IMR-90 (cell line): ENCODE measurements at regions of chr3 and their contacts with region 1.

Region 1: DNA sequence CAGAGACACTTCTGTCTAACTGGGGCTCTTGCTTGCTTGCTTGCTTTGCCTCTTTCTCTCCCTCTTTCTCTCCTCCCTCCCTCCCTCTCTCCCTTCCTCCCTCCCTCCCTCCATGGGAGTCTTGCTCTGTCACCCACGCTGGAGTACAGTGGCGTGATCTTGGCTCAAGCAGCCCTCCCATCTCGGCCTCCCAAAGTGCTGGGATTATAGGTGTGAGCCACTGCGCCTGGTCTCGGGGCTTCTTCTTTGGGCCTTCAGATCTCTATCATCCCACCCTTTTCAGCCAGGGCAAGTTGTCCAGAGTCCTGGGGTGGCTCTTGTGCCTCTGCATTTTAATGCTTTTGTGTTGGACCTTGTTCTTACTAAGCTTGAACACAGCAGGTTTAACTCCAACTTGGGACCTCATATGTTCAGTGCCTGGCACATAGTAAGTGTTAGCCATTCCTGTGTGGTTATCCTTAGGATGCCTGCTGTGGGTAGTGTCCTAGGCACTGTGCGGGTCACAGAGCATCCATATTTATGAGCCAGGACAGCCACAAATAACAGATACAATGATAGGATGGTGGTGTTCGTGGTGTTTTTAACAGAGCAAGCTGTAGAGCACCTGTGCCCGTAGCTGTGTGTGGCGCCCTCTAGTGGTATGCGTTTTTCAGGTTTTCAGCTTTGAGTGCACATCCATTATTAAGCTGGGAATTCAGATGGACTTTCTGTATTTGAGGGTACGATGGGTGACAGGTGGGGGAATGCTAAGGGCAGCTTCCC is 75.1 kb downstream of the CCK start:
- DNase-seq: peak; percentile 52
- ATAC-seq: peak; percentile 75
- H3K4me3 ChIP-seq: no peak overlapping the region
- H3K27ac ChIP-seq: no peak overlapping the region
- H3K4me1 ChIP-seq: peaks cover 4% of the 10 kb centered on the region
- H3K27me3 ChIP-seq: no peaks in the 10 kb centered on the region
- CTCF ChIP-seq: peak; percentile 74
- POLR2A ChIP-seq: no peak
- RAD21 ChIP-seq: peak; percentile 77

Region 2: GRCh38 chr3:41893977-41894376 is 296.9 kb before region 1 on chr3:
- CTCF ChIA-PET with region 1: interaction called, 4 read pairs
- POLR2A ChIA-PET with region 1: no interaction called
- dilution Hi-C with region 1: no loop called
- in situ Hi-C with region 1: loop called (anchors 5 kb)
- intact Hi-C with region 1: loop called (anchors 1 kb)
- DNase-seq: peak; percentile 62
- ATAC-seq: peak; percentile 68
- H3K4me3 ChIP-seq: no peak overlapping the region
- H3K27ac ChIP-seq: no peak overlapping the region
- H3K4me1 ChIP-seq: no peaks in the 10 kb centered on the region
- H3K27me3 ChIP-seq: no peaks in the 10 kb centered on the region
- CTCF ChIP-seq: peak; percentile 65
- POLR2A ChIP-seq: no peak
- RAD21 ChIP-seq: peak; percentile 77

Region 3: DNA sequence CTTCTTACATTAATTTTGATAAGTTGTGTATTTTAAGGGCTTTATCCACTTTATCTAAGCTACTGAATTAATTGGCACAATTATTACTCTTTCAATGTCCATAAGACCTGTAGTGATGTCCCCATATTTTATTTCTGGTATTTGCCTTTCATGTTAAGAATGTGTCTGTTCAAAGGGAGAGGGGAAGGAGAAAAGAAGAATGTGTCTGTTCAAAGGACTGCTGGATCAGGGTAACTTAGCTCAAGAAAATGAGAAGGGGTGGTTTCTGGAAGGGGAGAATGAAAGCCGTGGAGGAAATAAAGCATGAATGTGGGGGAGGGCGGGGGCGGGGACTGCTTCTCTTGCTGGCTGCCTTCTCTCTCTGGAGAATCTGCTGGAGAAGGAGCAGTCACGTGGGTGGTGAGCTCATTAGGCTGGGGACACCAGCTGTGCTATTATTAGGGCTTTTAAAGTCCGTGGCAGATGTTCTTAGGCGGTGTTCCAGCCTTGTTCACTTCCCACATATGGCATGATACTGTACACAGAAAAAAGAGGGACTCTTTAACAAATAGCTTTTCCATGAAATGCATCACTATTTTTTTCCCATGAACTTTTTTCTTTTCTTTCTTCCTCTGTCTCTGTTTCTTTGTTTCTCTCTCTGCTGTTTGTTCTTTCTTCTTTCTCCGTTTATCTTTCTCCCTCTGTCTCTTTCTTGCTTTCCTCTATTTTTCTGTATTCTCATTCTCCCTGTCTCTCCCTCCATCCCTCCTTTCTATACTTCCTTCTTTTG is 165.3 kb before region 1 on chr3:
- CTCF ChIA-PET with region 1: no interaction called
- POLR2A ChIA-PET with region 1: interaction called, 10 read pairs
- dilution Hi-C with region 1: no loop called
- in situ Hi-C with region 1: no loop called
- intact Hi-C with region 1: no loop called
- DNase-seq: peak; percentile 99
- ATAC-seq: peak; percentile 87
- H3K4me3 ChIP-seq: no peak overlapping the region
- H3K27ac ChIP-seq: peak overlapping the region; percentile 50; the same call in 1 of the 2 replicates
- H3K4me1 ChIP-seq: peaks cover 23% of the 10 kb centered on the region
- H3K27me3 ChIP-seq: no peaks in the 10 kb centered on the region
- CTCF ChIP-seq: no peak
- POLR2A ChIP-seq: 0 out of 2 replicates have a peak, but pooled peaks have one; percentile 34
- RAD21 ChIP-seq: no peak

Region 4: GRCh38 chr3:42118762-42119361 is 72.0 kb before region 1 on chr3:
- CTCF ChIA-PET with region 1: interaction called, 13 read pairs
- POLR2A ChIA-PET with region 1: no interaction called
- dilution Hi-C with region 1: no loop called
- in situ Hi-C with region 1: loop called (anchors 5 kb)
- intact Hi-C with region 1: loop called (anchors 2 kb)
- DNase-seq: peak; percentile 49
- ATAC-seq: peak; percentile 54; the same call in 1 of the 2 replicates
- H3K4me3 ChIP-seq: no peak overlapping the region
- H3K27ac ChIP-seq: no peak overlapping the region
- H3K4me1 ChIP-seq: peaks cover 11% of the 10 kb centered on the region
- H3K27me3 ChIP-seq: no peaks in the 10 kb centered on the region
- CTCF ChIP-seq: peak; percentile 37
- POLR2A ChIP-seq: no peak
- RAD21 ChIP-seq: peak; percentile 54

Region 5: GRCh38 chr3:42179110-42179725 is 11.7 kb before region 1 on chr3:
- CTCF ChIA-PET with region 1: interaction called, 14 read pairs
- POLR2A ChIA-PET with region 1: interaction called, 4 read pairs
- dilution Hi-C with region 1: no loop called
- in situ Hi-C with region 1: no loop called
- intact Hi-C with region 1: no loop called
- DNase-seq: peak; percentile 93
- ATAC-seq: peak; percentile 97
- H3K4me3 ChIP-seq: no peak overlapping the region
- H3K27ac ChIP-seq: peak overlapping the region; percentile 8; the same call in 1 of the 2 replicates
- H3K4me1 ChIP-seq: peaks cover 8% of the 10 kb centered on the region
- H3K27me3 ChIP-seq: no peaks in the 10 kb centered on the region
- CTCF ChIP-seq: no peak
- POLR2A ChIP-seq: no peak
- RAD21 ChIP-seq: no peak

Region 6: GRCh38 chr3:42247576-42248027 is 56.7 kb after region 1 on chr3:
- CTCF ChIA-PET with region 1: no interaction called
- POLR2A ChIA-PET with region 1: no interaction called
- dilution Hi-C with region 1: no loop called
- in situ Hi-C with region 1: no loop called
- intact Hi-C with region 1: no loop called
- DNase-seq: peak; percentile 49
- ATAC-seq: peak; percentile 77
- H3K4me3 ChIP-seq: 0 out of 2 replicates have a peak overlapping the region, but pooled peaks have one; percentile 12
- H3K27ac ChIP-seq: no peak overlapping the region
- H3K4me1 ChIP-seq: no peaks in the 10 kb centered on the region
- H3K27me3 ChIP-seq: peaks cover 33% of the 10 kb centered on the region
- CTCF ChIP-seq: peak; percentile 81
- POLR2A ChIP-seq: no peak
- RAD21 ChIP-seq: peak; percentile 81